ENCODE measurements at regions of chr14 and their contacts with region 1.

Region 1: GRCh38 chr14:69489495-69489894 is 5.0 kb downstream of the PLEKHD1 start:
- DNase-seq: no peak
- ATAC-seq: no peak
- H3K4me3 ChIP-seq: no peak overlapping the region
- H3K27ac ChIP-seq: no peak overlapping the region
- H3K4me1 ChIP-seq: no peaks in the 10 kb centered on the region
- H3K27me3 ChIP-seq: peaks cover 2% of the 10 kb centered on the region; the same call in 1 of the 2 replicates
- CTCF ChIP-seq: no peak

Region 2: GRCh38 chr14:68987653-68988036 is 501.9 kb before region 1 on chr14:
- CTCF ChIA-PET with region 1: no interaction called
- POLR2A ChIA-PET with region 1: interaction called, 19 read pairs
- in situ Hi-C with region 1: no loop called
- intact Hi-C with region 1: no loop called
- DNase-seq: no peak
- ATAC-seq: no peak
- H3K4me3 ChIP-seq: no peak overlapping the region
- H3K27ac ChIP-seq: no peak overlapping the region
- H3K4me1 ChIP-seq: no peaks in the 10 kb centered on the region
- H3K27me3 ChIP-seq: no peaks in the 10 kb centered on the region
- CTCF ChIP-seq: no peak

Region 3: DNA sequence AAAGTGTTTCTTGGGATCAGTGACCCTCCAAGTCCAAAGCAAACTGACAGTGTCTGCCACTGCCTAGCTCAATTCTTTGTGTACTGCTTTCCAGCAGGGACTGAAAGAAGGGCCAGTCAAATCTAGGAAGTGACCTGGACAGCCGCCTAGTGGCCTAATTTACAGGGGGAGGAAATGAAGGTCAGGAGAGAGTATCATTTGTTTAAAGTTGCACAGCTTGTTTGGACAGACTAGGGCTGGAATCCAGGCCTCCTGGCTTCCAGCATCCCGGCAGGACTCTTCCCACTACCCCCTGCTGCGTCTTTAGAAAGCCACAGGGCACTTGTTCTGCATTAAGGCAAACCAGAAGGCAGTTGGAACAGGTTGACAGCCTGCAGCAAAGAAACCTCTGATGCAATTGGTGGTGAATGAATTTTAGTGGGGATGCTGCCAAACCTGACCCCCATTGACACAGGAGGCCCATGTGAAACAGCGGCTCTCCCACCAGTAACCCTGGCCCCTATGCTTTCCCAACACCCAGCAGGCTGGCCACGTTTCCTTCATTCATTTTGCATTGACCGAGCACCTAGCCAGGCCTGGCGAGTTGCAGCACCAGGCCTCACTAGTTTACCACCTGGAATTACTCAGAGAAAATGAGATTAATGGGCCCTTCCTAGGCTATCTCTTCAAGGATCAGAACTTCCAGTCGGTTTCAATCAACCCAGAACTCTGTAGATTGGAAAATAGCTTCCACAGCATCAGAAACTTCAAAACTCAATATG is 201.3 kb before region 1 on chr14:
- CTCF ChIA-PET with region 1: no interaction called
- POLR2A ChIA-PET with region 1: no interaction called
- in situ Hi-C with region 1: no loop called
- intact Hi-C with region 1: no loop called
- DNase-seq: no peak
- ATAC-seq: peak; percentile 69
- H3K4me3 ChIP-seq: no peak overlapping the region
- H3K27ac ChIP-seq: no peak overlapping the region
- H3K4me1 ChIP-seq: no peaks in the 10 kb centered on the region
- H3K27me3 ChIP-seq: no peaks in the 10 kb centered on the region
- CTCF ChIP-seq: peak; percentile 59

Region 4: DNA sequence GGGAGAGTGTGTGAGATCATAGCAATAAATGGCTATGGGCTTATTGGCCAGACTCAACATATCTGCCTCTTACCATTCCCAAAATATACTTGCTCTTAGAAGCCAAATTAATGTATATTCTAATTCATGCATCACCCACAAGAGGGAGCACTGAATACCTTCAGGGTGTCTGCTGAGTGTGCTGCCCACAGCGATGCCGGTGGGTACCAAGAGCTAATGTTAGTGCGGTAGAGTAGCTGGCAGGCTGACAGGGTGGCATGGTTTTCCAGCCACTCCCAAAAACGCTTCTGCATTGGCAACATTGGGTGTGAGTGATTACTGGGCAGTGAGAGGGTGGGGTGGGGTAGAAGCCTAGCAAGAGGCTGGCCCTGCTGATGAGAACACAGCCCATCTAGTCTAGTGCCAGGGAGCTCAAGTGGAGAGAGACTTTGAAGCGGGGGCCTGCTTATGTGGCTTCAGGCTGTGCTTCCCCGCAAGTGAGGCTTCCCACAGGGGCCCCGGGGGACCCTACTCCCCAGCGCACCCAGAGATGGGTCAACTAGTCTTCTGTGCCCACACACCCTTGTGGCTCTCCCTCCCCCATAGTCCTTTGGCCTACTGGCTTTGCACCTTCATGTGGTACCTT is 14.2 kb before region 1 on chr14:
- CTCF ChIA-PET with region 1: interaction called, 13 read pairs
- POLR2A ChIA-PET with region 1: no interaction called
- in situ Hi-C with region 1: no loop called
- intact Hi-C with region 1: no loop called
- DNase-seq: no peak
- ATAC-seq: peak; percentile 62; the same call in 1 of the 2 replicates
- H3K4me3 ChIP-seq: no peak overlapping the region
- H3K27ac ChIP-seq: no peak overlapping the region
- H3K4me1 ChIP-seq: no peaks in the 10 kb centered on the region
- H3K27me3 ChIP-seq: no peaks in the 10 kb centered on the region
- CTCF ChIP-seq: peak; percentile 59

Measured in Panc1 (cell line).